Activated CD8-positive, alpha-beta T cell treated with anti-CD3 and anti-CD28 coated beads for 36 hours (primary cell): ENCODE measurements at regions of chr16 and their contacts with region 1.

Region 1: GRCh38 chr16:19555162-19555937 is at the start of gene VPS35L:
- DNase-seq: peak; percentile 96
- ATAC-seq: peak; percentile 95
- H3K4me3 Mint-ChIP-seq: peak within 1 kb of the TSS; percentile 85
- H3K27ac Mint-ChIP-seq: peak within 1 kb of the TSS; percentile 79
- H3K4me1 Mint-ChIP-seq: peaks cover 15% of the 10 kb centered on the region
- H3K27me3 Mint-ChIP-seq: no peaks in the 10 kb centered on the region
- CTCF ChIP-seq: peak; percentile 73
- total RNA-seq, gene VPS35L: 32.1 to 34.8 TPM

Region 2: GRCh38 chr16:19523648-19524355 is 31.5 kb before region 1 on chr16 and contains the start of gene CCP110:
- CTCF ChIA-PET with region 1: interaction called, 23 read pairs
- POLR2A ChIA-PET with region 1: interaction called, 21 read pairs
- intact Hi-C with region 1: no loop called
- DNase-seq: peak; percentile 98
- ATAC-seq: peak; percentile 87
- H3K4me3 Mint-ChIP-seq: peak within 1 kb of the TSS; percentile 97
- H3K27ac Mint-ChIP-seq: peak within 1 kb of the TSS; percentile 92
- H3K4me1 Mint-ChIP-seq: peaks cover 26% of the 10 kb centered on the region
- H3K27me3 Mint-ChIP-seq: no peaks in the 10 kb centered on the region
- CTCF ChIP-seq: no peak
- total RNA-seq, gene CCP110: 24.2 to 25.8 TPM

Region 3: DNA sequence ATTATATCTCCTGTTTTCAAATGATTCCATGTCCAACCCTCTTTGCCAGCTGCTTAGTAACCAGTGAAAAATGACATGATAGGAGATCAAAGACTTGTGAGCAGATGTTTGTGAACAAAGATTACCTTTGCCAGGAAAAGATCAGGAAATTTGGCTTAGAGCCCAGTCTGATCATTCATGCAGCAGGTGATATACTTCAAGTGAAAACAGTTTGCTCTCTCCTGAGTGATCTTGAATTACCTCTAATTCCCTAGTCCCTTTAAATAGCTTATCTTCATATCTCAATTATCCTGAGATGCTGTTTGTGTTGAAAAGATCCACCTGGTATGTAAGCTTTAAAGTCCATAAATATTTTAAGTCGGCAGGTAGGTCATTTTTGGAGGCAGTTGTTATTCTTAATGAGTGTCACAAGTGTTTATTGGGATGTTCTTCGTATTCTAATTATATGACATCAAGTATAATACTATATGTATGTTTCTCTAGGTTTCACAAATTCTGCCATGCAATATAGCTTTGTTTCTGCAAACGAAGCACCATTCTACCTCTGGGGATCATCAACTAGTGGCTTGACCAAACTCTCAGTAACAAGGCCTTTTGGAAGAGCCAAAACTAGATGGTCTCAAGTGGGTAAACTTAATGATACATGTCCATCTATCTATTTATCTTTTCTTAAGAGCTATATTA is 13.1 kb before region 1 on chr16:
- CTCF ChIA-PET with region 1: interaction called, 15 read pairs
- POLR2A ChIA-PET with region 1: interaction called, 8 read pairs
- intact Hi-C with region 1: no loop called
- DNase-seq: no peak
- ATAC-seq: no peak
- H3K4me3 Mint-ChIP-seq: no peak overlapping the region
- H3K27ac Mint-ChIP-seq: no peak overlapping the region
- H3K4me1 Mint-ChIP-seq: no peaks in the 10 kb centered on the region
- H3K27me3 Mint-ChIP-seq: no peaks in the 10 kb centered on the region
- CTCF ChIP-seq: no peak

Region 4: GRCh38 chr16:19704321-19705145 is 149.2 kb after region 1 on chr16:
- CTCF ChIA-PET with region 1: no interaction called
- POLR2A ChIA-PET with region 1: no interaction called
- intact Hi-C with region 1: no loop called
- DNase-seq: no peak
- ATAC-seq: no peak
- H3K4me3 Mint-ChIP-seq: no peak overlapping the region
- H3K27ac Mint-ChIP-seq: peak overlapping the region; percentile 20
- H3K4me1 Mint-ChIP-seq: peaks cover 2% of the 10 kb centered on the region
- H3K27me3 Mint-ChIP-seq: no peaks in the 10 kb centered on the region
- CTCF ChIP-seq: no peak

Region 5: GRCh38 chr16:19717771-19718602 is 162.6 kb after region 1 on chr16 and contains the starts of genes IQCK and KNOP1:
- CTCF ChIA-PET with region 1: interaction called, 4 read pairs
- POLR2A ChIA-PET with region 1: interaction called, 3 read pairs
- intact Hi-C with region 1: loop called (anchors 5 kb)
- DNase-seq: peak; percentile 91
- ATAC-seq: peak; percentile 93
- H3K4me3 Mint-ChIP-seq: peak within 1 kb of the TSS; percentile 95
- H3K27ac Mint-ChIP-seq: peak within 1 kb of the TSS; percentile 88
- H3K4me1 Mint-ChIP-seq: peaks cover 20% of the 10 kb centered on the region
- H3K27me3 Mint-ChIP-seq: no peaks in the 10 kb centered on the region
- CTCF ChIP-seq: no peak
- total RNA-seq, gene IQCK: 1.7 to 3.5 TPM
- total RNA-seq, gene KNOP1: 27.8 to 28.6 TPM

Region 6: GRCh38 chr16:19886073-19886941 is 331.0 kb after region 1 on chr16:
- CTCF ChIA-PET with region 1: interaction called, 47 read pairs
- POLR2A ChIA-PET with region 1: no interaction called
- intact Hi-C with region 1: loop called (anchors 2 kb)
- DNase-seq: peak; percentile 90
- ATAC-seq: peak; percentile 86
- H3K4me3 Mint-ChIP-seq: peak overlapping the region; percentile 73
- H3K27ac Mint-ChIP-seq: peak overlapping the region; percentile 16
- H3K4me1 Mint-ChIP-seq: peaks cover 20% of the 10 kb centered on the region
- H3K27me3 Mint-ChIP-seq: peaks cover 30% of the 10 kb centered on the region
- CTCF ChIP-seq: peak; percentile 98